CD4-positive, alpha-beta memory T cell (primary cell): ENCODE measurements at regions of chr9 and their contacts with region 1.

Region 1: GRCh38 chr9:132249123-132249522 is 87.3 kb downstream of the NTNG2 start:
- DNase-seq: no peak
- H3K4me3 ChIP-seq: no peak overlapping the region
- H3K4me3 Mint-ChIP-seq: no peak overlapping the region
- H3K27ac ChIP-seq: no peak overlapping the region
- H3K27ac Mint-ChIP-seq: no peak overlapping the region
- H3K4me1 ChIP-seq: no peaks in the 10 kb centered on the region
- H3K4me1 Mint-ChIP-seq: no peaks in the 10 kb centered on the region
- H3K27me3 ChIP-seq: no peaks in the 10 kb centered on the region
- H3K27me3 Mint-ChIP-seq: peaks cover 3 to 4% of the 10 kb centered on the region in 2 donors

Region 2: DNA sequence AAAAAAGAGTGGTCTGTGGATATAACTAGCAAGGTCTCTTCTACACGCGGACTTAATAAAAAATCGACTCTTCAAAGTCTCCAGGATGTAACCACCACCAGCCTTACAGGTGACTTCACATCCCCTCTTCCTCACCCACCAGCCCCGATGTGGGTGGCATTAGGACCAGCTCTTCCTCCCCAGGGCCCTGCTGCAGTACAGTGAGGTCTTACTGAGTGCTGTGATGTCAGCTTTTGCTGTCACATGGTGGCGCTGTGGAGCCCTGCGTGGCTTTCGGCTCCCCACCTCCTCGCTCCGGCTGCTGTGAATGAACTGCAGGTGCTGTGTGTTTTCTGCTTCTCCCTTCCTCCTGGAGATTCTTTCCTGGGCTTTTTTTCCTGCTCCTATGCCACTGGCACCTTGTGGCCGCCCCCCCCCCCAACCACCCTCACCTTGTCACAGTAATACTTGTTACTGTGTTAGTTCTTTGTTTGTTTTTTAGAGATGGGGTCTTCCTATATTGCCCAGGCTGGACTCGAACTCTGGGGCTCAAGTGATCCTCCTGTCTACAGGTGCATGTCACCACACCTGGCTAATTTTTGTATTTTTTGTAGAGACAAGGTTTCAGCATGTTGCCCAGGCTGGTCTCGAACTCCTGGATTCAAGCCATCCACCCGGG is 493.5 kb before region 1 on chr9:
- CTCF ChIA-PET with region 1: interaction called, 64 read pairs
- POLR2A ChIA-PET with region 1: no interaction called
- intact Hi-C with region 1: loop called (anchors 2 kb)
- DNase-seq: peak; percentile 80 to 82 (median 80)
- H3K4me3 ChIP-seq: no peak overlapping the region
- H3K4me3 Mint-ChIP-seq: peak overlapping the region in 2 of 8 donors; percentile 53 to 70
- H3K27ac ChIP-seq: no peak overlapping the region
- H3K27ac Mint-ChIP-seq: peak overlapping the region in 5 of 7 donors; percentile 2 to 94 (median 18)
- H3K4me1 ChIP-seq: peaks cover 6% of the 10 kb centered on the region
- H3K4me1 Mint-ChIP-seq: peaks cover 4 to 6% (median 6%) of the 10 kb centered on the region in 4 donors
- H3K27me3 ChIP-seq: no peaks in the 10 kb centered on the region
- H3K27me3 Mint-ChIP-seq: peaks cover 4% of the 10 kb centered on the region in 2 donors

Region 3: GRCh38 chr9:131762356-131762932 is 486.7 kb before region 1 on chr9:
- CTCF ChIA-PET with region 1: interaction called, 64 read pairs
- POLR2A ChIA-PET with region 1: no interaction called
- intact Hi-C with region 1: no loop called
- DNase-seq: peak; percentile 64 to 74 (median 67)
- H3K4me3 ChIP-seq: no peak overlapping the region
- H3K4me3 Mint-ChIP-seq: no peak overlapping the region
- H3K27ac ChIP-seq: no peak overlapping the region
- H3K27ac Mint-ChIP-seq: peak overlapping the region in 2 of 7 donors; percentile 19 to 35
- H3K4me1 ChIP-seq: peaks cover 7% of the 10 kb centered on the region
- H3K4me1 Mint-ChIP-seq: no peaks in the 10 kb centered on the region
- H3K27me3 ChIP-seq: no peaks in the 10 kb centered on the region
- H3K27me3 Mint-ChIP-seq: peaks cover 2 to 4% of the 10 kb centered on the region in 2 donors

Region 4: DNA sequence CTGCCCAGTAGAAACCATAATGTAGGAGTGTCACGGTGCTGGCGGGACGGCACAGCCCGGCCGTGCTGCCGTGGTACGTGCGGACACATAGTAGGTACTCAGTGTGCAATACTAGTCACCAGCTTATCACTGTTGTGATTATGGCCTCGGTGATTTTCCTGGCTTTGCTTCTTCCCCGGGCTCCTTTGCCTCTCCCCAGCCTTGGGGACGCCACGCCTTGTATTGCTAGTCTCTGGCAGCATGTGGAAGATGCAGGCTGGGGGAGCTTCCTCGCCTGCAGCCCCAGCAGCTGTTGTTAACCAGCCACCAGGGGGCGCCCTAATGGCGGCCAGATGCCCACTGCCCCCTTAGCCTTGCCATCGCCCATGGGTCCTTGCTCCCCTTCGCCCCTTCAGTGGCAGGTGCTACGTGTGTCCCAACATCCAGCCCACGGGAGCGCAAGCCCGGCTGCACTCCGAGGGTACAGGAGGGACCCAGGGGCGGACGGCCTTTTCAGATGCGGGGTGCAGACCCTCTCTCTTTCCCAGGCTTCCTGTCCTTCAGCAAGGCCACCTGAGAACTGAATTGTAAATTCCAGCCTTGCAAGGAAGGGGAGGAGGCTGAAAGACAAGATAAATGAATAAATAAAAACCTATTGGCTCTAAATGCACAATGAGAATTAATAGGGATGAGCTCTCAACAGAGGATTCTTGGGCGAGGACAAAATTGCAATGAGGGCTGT is 79.3 kb before region 1 on chr9:
- CTCF ChIA-PET with region 1: interaction called, 19 read pairs
- POLR2A ChIA-PET with region 1: no interaction called
- intact Hi-C with region 1: no loop called
- DNase-seq: peak in 4 of 5 donors; percentile 42 to 55 (median 44)
- H3K4me3 ChIP-seq: no peak overlapping the region
- H3K4me3 Mint-ChIP-seq: peak overlapping the region in 1 of 8 donors; percentile 20
- H3K27ac ChIP-seq: no peak overlapping the region
- H3K27ac Mint-ChIP-seq: peak overlapping the region in 2 of 7 donors; percentile 31 to 32
- H3K4me1 ChIP-seq: no peaks in the 10 kb centered on the region
- H3K4me1 Mint-ChIP-seq: no peaks in the 10 kb centered on the region
- H3K27me3 ChIP-seq: peaks cover 5% of the 10 kb centered on the region
- H3K27me3 Mint-ChIP-seq: peaks cover 29 to 34% of the 10 kb centered on the region in 2 donors

Region 5: DNA sequence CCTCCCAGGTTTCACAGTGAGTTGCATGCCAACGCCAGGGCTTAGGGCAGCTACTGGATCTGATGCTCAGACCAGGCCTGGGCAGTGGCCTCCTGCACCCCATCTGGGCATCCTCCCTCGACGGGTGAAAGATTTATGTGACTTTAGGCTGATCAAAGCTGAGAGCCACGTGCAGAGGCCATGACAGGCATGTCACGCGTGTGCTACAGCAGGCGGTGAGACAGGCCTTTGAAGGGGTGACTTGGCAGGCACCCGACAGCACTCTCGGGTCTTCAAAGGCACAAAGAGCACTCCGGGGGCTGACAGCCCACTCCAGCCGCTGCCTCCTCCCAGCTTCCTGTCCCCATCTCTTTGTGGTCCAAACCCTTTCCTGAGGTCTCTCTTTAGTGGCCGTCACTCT is 21.1 kb before region 1 on chr9:
- CTCF ChIA-PET with region 1: no interaction called
- POLR2A ChIA-PET with region 1: no interaction called
- intact Hi-C with region 1: no loop called
- DNase-seq: no peak
- H3K4me3 ChIP-seq: no peak overlapping the region
- H3K4me3 Mint-ChIP-seq: no peak overlapping the region
- H3K27ac ChIP-seq: no peak overlapping the region
- H3K27ac Mint-ChIP-seq: no peak overlapping the region
- H3K4me1 ChIP-seq: no peaks in the 10 kb centered on the region
- H3K4me1 Mint-ChIP-seq: peaks cover 0 to 1% (median 0%) of the 10 kb centered on the region in 4 donors
- H3K27me3 ChIP-seq: no peaks in the 10 kb centered on the region
- H3K27me3 Mint-ChIP-seq: peaks cover 7 to 12% of the 10 kb centered on the region in 2 donors

Region 6: DNA sequence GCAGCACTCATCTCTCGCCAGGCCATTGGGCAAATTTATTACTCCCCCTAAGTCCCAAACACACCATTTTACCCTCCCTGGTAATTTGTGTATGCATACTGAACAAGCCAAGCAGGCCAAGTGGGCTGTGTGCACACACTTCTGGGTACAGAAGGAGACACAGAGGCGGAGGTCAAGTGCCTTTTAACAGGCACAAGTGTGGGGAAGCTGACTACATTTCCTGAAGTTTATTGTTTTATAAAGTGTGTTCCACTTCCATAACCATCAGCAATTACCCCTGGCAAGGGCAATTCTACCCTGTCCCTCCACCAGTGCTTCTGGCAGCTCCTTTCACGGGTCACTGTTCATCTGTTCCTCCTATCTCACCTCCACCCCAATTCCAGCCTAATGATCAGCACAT is 11.7 kb after region 1 on chr9:
- CTCF ChIA-PET with region 1: interaction called, 31 read pairs
- POLR2A ChIA-PET with region 1: no interaction called
- intact Hi-C with region 1: no loop called
- DNase-seq: no peak
- H3K4me3 ChIP-seq: no peak overlapping the region
- H3K4me3 Mint-ChIP-seq: no peak overlapping the region
- H3K27ac ChIP-seq: no peak overlapping the region
- H3K27ac Mint-ChIP-seq: peak overlapping the region in 1 of 7 donors; percentile 43
- H3K4me1 ChIP-seq: peaks cover 9% of the 10 kb centered on the region
- H3K4me1 Mint-ChIP-seq: peaks cover 4 to 19% (median 6%) of the 10 kb centered on the region in 4 donors
- H3K27me3 ChIP-seq: no peaks in the 10 kb centered on the region
- H3K27me3 Mint-ChIP-seq: no peaks in the 10 kb centered on the region